ENCODE measurements at regions of chr1 and their contacts with region 1.

Region 1: GRCh38 chr1:113389953-113390834 is at the start of gene MAGI3:
- DNase-seq: peak; percentile 97
- H3K4me3 Mint-ChIP-seq: peak within 1 kb of the TSS; percentile 83
- H3K27ac Mint-ChIP-seq: peak within 1 kb of the TSS; percentile 48
- H3K4me1 Mint-ChIP-seq: peaks cover 20% of the 10 kb centered on the region
- H3K27me3 Mint-ChIP-seq: no peaks in the 10 kb centered on the region
- total RNA-seq, gene MAGI3: 5.9 to 6.4 TPM

Region 2: DNA sequence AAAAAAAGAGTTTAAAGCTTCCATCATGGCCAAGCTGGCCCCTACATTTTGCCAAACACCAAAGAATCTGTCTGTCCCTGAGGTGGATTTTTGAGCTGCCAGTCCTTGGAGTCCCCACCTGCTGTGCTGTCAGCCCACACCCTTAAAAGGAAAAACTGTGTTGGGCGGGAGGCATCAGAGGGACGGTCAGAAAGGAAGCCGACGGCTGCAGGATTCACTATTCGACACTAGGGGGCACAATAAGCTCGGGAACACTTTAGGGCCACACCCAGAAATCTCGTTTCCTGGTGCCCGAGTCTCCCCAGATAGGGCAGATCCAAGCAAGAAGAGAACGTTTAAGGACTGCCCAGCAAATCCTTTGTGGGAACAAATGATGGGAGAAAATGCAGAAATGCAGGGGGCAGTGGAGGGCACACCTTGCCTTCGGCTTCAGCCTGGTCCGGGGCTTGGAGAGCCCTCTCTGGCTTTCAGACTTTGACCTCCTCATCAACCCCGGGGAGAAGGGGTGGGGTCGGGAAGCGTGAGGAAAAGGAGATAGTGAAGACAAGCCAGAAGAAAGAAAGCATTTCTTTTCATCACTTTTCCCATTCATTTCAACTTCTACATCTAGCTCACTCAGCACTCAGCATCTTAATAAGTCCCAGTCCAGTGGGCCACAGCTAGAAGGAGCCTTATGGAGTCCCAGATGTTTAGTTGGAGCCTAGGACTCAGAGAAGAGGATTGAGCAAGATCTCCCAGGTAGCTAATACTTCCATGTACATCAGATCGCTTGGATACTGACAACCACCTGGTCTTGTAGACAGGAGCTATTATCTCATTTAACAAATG is 999.2 kb before region 1 on chr1:
- CTCF ChIA-PET with region 1: no interaction called
- intact Hi-C with region 1: loop called (anchors 10 kb)
- DNase-seq: peak; percentile 90
- H3K4me3 Mint-ChIP-seq: peak overlapping the region; percentile 45
- H3K27ac Mint-ChIP-seq: no peak overlapping the region
- H3K4me1 Mint-ChIP-seq: peaks cover 18% of the 10 kb centered on the region
- H3K27me3 Mint-ChIP-seq: peaks cover 14% of the 10 kb centered on the region

Region 3: DNA sequence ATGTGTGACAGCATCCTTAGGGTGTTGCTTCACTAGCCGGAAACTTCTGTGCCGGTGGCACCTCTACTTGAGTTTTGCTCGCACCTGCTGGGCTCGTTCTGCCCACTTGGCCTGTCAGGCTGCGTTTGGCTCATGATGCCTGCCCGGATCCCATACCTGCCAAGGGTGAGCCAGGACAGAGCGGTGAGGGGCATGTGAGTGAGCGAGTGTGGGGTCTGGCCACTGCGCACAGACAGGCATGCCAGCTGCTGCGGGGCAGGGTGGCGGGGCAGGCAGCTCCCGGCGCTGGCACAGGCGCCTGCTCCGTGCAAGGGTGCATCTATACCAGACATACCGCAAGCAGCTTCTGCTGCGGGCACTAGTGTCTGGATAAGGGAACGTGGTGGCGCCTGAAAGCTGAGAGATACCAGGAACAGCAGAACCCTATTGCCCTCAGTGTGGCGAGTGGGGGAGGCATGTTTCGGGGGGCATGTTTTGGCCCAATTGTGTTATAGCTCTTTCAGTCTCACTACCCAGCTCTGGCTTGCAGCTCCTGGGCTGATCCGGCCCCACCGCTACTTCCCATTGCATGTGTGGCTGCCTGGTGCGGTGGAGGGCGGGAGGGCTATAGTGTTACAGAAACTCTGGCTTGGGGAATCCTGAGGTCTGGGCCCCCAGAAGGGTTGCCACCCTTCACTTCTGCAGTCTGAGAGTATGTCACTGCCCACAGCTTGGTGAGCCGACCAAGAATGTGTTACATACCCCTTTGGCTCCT is 32.3 kb after region 1 on chr1:
- CTCF ChIA-PET with region 1: no interaction called
- intact Hi-C with region 1: no loop called
- DNase-seq: no peak
- H3K4me3 Mint-ChIP-seq: no peak overlapping the region
- H3K27ac Mint-ChIP-seq: no peak overlapping the region
- H3K4me1 Mint-ChIP-seq: no peaks in the 10 kb centered on the region
- H3K27me3 Mint-ChIP-seq: no peaks in the 10 kb centered on the region

Region 4: DNA sequence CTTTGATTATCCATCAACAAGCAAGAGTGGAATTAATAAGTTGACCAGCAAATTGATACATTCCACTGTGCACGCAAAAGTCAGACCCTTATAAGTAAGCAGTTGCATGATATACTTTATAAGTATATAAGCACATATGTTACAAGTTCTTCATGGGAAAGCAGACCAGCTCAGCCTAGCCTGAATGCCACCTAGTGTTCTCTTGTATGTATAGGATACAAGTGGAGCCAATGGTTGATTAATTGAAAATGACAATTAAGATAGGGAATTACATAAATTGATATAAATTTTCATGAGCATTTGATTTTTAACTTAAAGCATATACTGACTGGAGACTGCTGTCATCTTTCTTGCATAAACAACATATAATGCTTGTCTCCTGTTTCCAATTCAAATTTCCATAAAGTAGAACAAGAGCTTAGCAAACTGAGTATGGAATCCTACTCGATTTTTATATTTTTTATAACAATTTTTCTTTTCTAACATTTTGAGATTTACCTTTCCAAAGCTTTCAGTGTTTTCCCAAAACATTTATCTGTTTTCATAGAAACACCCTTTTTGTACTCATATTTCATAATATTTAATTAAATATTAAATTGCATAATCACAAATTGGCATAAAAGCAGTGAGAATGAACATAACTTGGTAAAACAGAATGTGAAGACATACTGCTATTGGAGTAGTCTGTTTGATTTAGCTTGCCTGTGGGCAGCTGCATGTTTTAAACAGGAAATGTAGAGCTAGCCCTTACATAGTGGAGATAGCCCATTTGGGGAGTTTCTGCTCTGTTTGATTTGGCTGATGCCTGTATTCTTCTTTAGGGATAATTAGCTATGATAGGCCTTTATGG is 63.0 kb after region 1 on chr1:
- CTCF ChIA-PET with region 1: interaction called, 3 read pairs
- intact Hi-C with region 1: loop called (anchors 2 kb)
- DNase-seq: peak; percentile 18
- H3K4me3 Mint-ChIP-seq: no peak overlapping the region
- H3K27ac Mint-ChIP-seq: no peak overlapping the region
- H3K4me1 Mint-ChIP-seq: no peaks in the 10 kb centered on the region
- H3K27me3 Mint-ChIP-seq: no peaks in the 10 kb centered on the region

Region 5: DNA sequence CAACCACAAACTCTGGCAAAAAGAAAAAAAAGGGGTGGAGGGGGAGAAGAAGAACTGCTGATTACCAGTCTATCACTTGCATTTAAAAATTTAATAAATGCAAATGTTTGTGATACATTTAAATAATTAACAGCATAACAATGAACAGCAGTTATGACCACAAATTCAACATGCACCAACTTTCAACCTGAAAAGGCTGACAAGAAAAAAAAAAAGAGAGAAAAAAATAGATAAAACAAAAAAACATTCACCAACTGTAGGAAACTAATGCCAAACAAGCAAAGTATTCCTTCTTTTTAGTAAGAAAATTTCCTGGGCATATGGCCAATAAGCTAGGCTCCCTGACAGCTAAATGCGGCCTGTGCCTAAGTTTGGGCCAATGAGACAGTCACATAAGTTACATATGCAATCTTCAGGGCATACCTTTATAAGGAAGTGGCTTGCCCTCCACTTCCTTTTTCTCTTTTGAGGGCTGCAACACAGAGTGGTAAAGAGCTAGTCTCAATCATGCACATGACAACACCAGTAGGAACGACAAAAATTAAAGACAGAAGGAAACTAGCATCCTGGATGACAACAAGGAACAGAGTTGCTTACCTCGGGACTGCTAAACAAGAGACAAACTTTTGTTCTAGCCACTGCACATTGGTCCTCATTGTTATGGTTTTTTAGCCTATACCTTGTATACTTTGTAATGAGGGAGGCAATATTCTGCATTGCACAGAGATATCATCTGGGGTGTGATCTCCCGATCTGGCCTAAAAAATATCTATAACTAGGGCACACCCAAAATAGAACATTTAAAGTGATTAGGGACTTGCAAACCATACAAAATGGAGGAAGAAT is 393.3 kb after region 1 on chr1:
- CTCF ChIA-PET with region 1: no interaction called
- intact Hi-C with region 1: loop called (anchors 10 kb)
- DNase-seq: peak; percentile 60
- H3K4me3 Mint-ChIP-seq: peak overlapping the region; percentile 36
- H3K27ac Mint-ChIP-seq: peak overlapping the region; percentile 95
- H3K4me1 Mint-ChIP-seq: peaks cover 41% of the 10 kb centered on the region
- H3K27me3 Mint-ChIP-seq: no peaks in the 10 kb centered on the region

Region 6: DNA sequence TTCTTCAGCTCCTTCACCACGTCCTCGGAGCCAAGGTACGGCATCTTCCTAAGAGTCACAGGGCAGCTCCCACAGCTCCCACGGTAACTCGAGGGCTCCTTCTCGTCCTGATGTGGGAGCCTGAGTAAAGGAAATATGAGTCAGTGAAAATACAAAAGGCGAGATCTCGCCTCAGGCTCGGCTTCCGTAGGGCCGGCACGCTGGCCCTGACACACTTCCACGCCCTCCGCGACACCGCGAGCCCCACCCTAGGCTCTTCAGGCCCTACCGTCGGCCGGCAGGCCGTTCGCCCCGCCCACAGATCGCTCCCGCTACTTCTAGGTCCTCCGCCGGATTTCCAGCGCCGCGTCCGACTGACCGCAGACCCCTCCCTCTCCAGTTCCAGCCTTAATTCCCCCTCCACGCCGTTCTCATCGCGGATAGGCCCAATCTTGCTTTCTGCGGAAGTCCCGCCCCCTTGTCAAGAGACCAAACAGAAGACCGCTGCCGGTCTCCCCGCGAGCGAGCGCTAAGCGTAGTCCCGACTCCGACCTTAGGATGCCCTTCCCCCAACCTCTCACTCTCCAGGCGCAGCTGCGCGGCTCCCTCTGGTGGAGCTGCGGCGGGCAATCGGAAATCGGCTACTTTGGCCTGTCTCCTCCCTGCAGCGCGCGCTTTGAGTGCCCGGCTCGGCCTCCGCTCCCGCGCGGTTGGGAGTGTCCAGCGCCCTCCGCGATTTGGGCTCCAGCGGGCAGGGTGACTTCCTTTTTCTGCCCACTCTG is 514.7 kb after region 1 on chr1 and contains the starts of genes AP4B1 and DCLRE1B:
- CTCF ChIA-PET with region 1: no interaction called
- intact Hi-C with region 1: loop called (anchors 1 kb)
- DNase-seq: peak; percentile 99
- H3K4me3 Mint-ChIP-seq: peak within 1 kb of the TSS; percentile 99
- H3K27ac Mint-ChIP-seq: peak within 1 kb of the TSS; percentile 97
- H3K4me1 Mint-ChIP-seq: peaks cover 51% of the 10 kb centered on the region
- H3K27me3 Mint-ChIP-seq: no peaks in the 10 kb centered on the region
- total RNA-seq, gene AP4B1: 35.7 to 40.2 TPM
- total RNA-seq, gene DCLRE1B: 17.7 to 18.3 TPM